Heart right ventricle (tissue), 16 donors: ENCODE measurements at regions of chr4 and their contacts with region 1.

Region 1: GRCh38 chr4:87458913-87459312 is 36.5 kb downstream of the NUDT9 start:
- DNase-seq: no peak
- ATAC-seq: no peak
- H3K4me3 ChIP-seq: no peak overlapping the region
- H3K27ac ChIP-seq: no peak overlapping the region
- H3K4me1 ChIP-seq: no peaks in the 10 kb centered on the region
- H3K27me3 ChIP-seq: no peaks in the 10 kb centered on the region
- CTCF ChIP-seq: no peak

Region 2: GRCh38 chr4:87363567-87363966 is 95.3 kb before region 1 on chr4:
- intact Hi-C with region 1: loop called in 2 of 10 experiments (anchors 5 kb)
- DNase-seq: no peak
- ATAC-seq: no peak
- H3K4me3 ChIP-seq: no peak overlapping the region
- H3K27ac ChIP-seq: no peak overlapping the region
- H3K4me1 ChIP-seq: peaks cover 0 to 8% (median 0%) of the 10 kb centered on the region in 9 donors
- H3K27me3 ChIP-seq: no peaks in the 10 kb centered on the region
- CTCF ChIP-seq: no peak

Region 3: GRCh38 chr4:87375719-87376291 is 83.1 kb before region 1 on chr4:
- intact Hi-C with region 1: loop called in 3 of 10 experiments (anchors 5 kb)
- DNase-seq: peak in 1 of 2 donors; percentile 30
- ATAC-seq: peak in 7 of 8 donors; percentile 58 to 83 (median 69)
- H3K4me3 ChIP-seq: no peak overlapping the region
- H3K27ac ChIP-seq: peak overlapping the region in 2 of 10 donors; percentile 12 to 31
- H3K4me1 ChIP-seq: peaks cover 0 to 12% (median 4%) of the 10 kb centered on the region in 9 donors
- H3K27me3 ChIP-seq: no peaks in the 10 kb centered on the region
- CTCF ChIP-seq: peak; percentile 20 to 87 (median 72)

Region 4: GRCh38 chr4:87399148-87399547 is 59.8 kb before region 1 on chr4:
- intact Hi-C with region 1: no loop called
- DNase-seq: peak in 1 of 2 donors; percentile 25
- ATAC-seq: peak in 4 of 8 donors; percentile 52 to 70 (median 57)
- H3K4me3 ChIP-seq: no peak overlapping the region
- H3K27ac ChIP-seq: no peak overlapping the region
- H3K4me1 ChIP-seq: no peaks in the 10 kb centered on the region
- H3K27me3 ChIP-seq: no peaks in the 10 kb centered on the region
- CTCF ChIP-seq: no peak

Region 5: GRCh38 chr4:87422104-87423052 is 36.5 kb before region 1 on chr4 and contains the start of gene NUDT9:
- intact Hi-C with region 1: no loop called
- DNase-seq: peak; percentile 94 to 97
- ATAC-seq: peak; percentile 93 to 98 (median 97)
- H3K4me3 ChIP-seq: peak within 1 kb of the TSS; percentile 62 to 96 (median 78)
- H3K27ac ChIP-seq: peak within 1 kb of the TSS; percentile 79 to 94 (median 89)
- H3K4me1 ChIP-seq: peaks cover 4 to 35% (median 30%) of the 10 kb centered on the region in 9 donors
- H3K27me3 ChIP-seq: no peaks in the 10 kb centered on the region
- CTCF ChIP-seq: no peak
- total RNA-seq, gene NUDT9: 24.1 to 33.0 (median 27.7) TPM

Region 6: GRCh38 chr4:87895964-87896621 is 437.2 kb after region 1 on chr4:
- intact Hi-C with region 1: no loop called
- DNase-seq: no peak
- ATAC-seq: peak in 5 of 8 donors; percentile 30 to 81 (median 58)
- H3K4me3 ChIP-seq: no peak overlapping the region
- H3K27ac ChIP-seq: peak overlapping the region in 1 of 10 donors; percentile 36
- H3K4me1 ChIP-seq: peaks cover 0 to 19% (median 0%) of the 10 kb centered on the region in 9 donors
- H3K27me3 ChIP-seq: no peaks in the 10 kb centered on the region
- CTCF ChIP-seq: no peak